ENCODE measurements at regions of chr12 and their contacts with region 1.

Region 1: GRCh38 chr12:3299929-3300832 is 190.8 kb upstream of the PRMT8 start:
- DNase-seq: peak; percentile 94
- ATAC-seq: peak; percentile 71
- H3K4me3 Mint-ChIP-seq: peak overlapping the region; percentile 50
- H3K27ac Mint-ChIP-seq: no peak overlapping the region; the same call in 1 of the 2 replicates
- H3K4me1 Mint-ChIP-seq: peaks cover 12% of the 10 kb centered on the region
- H3K27me3 Mint-ChIP-seq: no peaks in the 10 kb centered on the region; the same call in 1 of the 2 replicates
- CTCF ChIP-seq: peak; percentile 95

Region 2: DNA sequence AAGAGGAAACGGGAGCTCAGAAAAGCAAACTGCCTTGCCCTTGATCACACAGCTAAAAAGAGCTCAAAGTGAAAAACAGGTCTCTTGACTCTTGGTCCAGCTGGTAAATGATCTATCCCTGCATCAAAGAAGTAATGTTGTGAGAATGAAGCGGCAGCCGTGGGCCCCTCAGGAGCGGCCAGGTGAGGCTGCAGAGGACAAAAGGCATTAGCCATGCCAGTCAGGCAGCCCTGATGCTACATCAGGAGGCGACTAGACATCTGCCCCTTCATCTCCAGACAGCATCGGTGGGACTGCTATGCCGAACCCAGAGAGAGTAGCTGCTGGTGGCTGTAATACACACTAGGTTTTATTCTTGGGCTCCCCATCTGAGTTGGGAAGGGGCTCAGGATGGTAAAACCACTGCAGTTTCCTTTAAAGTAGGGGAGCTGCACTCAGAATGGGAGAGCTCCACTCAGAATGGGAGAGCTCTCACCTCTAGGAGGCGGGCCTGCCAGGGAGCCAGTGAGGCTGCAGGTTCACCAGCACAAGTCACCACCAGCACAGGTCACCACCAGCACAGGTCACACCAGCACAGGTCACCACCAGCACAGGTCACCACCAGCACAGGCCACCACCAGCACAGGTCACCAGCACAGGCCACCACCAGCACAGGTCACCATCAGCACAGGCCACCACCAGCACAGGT is 102.9 kb before region 1 on chr12:
- CTCF ChIA-PET with region 1: interaction called, 13 read pairs
- POLR2A ChIA-PET with region 1: no interaction called
- DNase-seq: no peak
- ATAC-seq: no peak
- H3K4me3 Mint-ChIP-seq: no peak overlapping the region
- H3K27ac Mint-ChIP-seq: no peak overlapping the region
- H3K4me1 Mint-ChIP-seq: peaks cover 41% of the 10 kb centered on the region
- H3K27me3 Mint-ChIP-seq: peaks cover 31% of the 10 kb centered on the region
- CTCF ChIP-seq: no peak

Region 3: DNA sequence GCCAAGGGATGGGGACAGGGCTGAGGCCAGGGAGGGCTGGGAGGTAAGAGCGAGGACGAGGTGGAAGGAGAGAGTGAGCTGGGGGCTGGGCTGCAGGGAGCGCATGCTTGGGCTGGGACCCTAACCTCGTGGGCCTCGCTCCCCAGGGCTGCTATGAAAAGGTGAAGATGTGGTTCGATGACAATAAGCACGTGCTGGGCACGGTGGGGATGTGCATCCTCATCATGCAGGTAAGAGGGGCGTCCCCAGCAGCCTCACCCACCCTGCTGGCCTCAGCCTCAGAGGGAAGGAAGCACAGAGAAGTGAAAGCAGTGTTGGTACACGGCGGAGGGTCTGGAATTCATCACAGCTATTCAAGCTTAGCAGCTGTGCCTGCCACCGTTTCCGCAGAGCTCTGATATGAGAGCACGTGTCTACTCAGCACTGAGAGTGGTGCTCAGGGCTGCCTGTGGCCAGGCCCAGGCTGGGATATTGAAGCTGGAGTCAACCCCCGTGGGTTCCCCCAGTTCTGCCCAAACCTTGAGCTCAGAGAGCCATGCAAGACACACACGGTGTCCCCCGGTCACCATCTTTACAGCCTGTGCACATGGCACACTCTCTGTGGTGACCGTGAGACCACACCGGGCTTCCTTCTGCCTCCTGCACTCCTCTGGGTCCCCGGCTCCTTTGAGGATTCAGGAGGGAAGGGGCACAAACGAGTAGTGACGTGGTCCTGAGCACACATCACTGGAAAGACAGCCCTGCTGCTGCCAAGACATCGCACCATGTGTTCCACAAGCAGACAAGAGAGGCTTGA is 18.4 kb before region 1 on chr12:
- CTCF ChIA-PET with region 1: interaction called, 44 read pairs
- POLR2A ChIA-PET with region 1: no interaction called
- DNase-seq: no peak
- ATAC-seq: no peak
- H3K4me3 Mint-ChIP-seq: no peak overlapping the region
- H3K27ac Mint-ChIP-seq: no peak overlapping the region
- H3K4me1 Mint-ChIP-seq: peaks cover 25% of the 10 kb centered on the region
- H3K27me3 Mint-ChIP-seq: no peaks in the 10 kb centered on the region
- CTCF ChIP-seq: no peak

Region 4: DNA sequence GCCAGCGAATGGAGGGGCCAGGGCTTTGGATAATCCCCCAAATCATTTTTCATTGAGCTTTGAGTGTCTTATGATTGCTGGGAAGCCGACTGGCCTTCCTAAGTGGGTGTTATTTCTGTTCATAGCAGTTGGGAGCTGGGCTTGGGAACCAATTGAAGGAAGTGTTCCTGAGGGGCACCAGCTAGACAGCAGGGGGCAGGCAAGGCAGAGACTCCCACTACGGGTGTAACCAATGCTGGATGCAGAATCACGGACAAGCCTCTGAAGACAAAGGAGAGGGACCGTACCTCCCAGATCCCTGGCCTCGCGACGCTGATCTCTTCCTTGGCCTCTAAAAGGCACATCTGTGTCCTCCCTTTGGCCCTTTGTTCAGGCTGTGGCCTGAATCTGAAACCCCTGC is 41.9 kb after region 1 on chr12:
- CTCF ChIA-PET with region 1: interaction called, 12 read pairs
- POLR2A ChIA-PET with region 1: no interaction called
- DNase-seq: peak; percentile 61
- ATAC-seq: peak; percentile 89
- H3K4me3 Mint-ChIP-seq: no peak overlapping the region
- H3K27ac Mint-ChIP-seq: no peak overlapping the region
- H3K4me1 Mint-ChIP-seq: peaks cover 20% of the 10 kb centered on the region
- H3K27me3 Mint-ChIP-seq: no peaks in the 10 kb centered on the region
- CTCF ChIP-seq: no peak

Region 5: DNA sequence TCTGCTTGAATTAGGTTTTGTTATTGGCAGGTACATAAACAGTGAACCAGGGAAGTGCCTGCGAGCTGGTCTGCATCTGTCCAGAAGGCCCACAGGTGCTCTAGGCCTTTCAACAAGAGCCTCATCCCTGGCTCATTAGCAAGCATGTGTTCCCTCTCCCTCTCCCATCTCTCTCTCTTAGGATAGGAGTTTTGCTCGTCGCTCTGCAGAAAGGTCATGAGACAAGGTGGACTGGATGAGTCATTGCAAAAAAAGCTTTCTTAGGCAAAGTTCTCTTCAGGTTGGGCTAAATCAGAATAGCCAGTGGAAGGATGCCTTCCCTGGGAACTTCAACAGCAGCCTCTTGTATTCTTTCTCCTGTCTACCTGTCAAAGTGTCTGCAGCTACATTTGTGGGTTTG is 176.2 kb after region 1 on chr12:
- CTCF ChIA-PET with region 1: interaction called, 13 read pairs
- POLR2A ChIA-PET with region 1: no interaction called
- DNase-seq: no peak
- ATAC-seq: no peak
- H3K4me3 Mint-ChIP-seq: no peak overlapping the region
- H3K27ac Mint-ChIP-seq: no peak overlapping the region
- H3K4me1 Mint-ChIP-seq: peaks cover 32% of the 10 kb centered on the region
- H3K27me3 Mint-ChIP-seq: peaks cover 14% of the 10 kb centered on the region
- CTCF ChIP-seq: no peak

Region 6: GRCh38 chr12:3641428-3642018 is 341.3 kb after region 1 on chr12:
- CTCF ChIA-PET with region 1: interaction called, 11 read pairs
- POLR2A ChIA-PET with region 1: no interaction called
- DNase-seq: no peak
- ATAC-seq: no peak
- H3K4me3 Mint-ChIP-seq: no peak overlapping the region
- H3K27ac Mint-ChIP-seq: no peak overlapping the region
- H3K4me1 Mint-ChIP-seq: peaks cover 16% of the 10 kb centered on the region
- H3K27me3 Mint-ChIP-seq: peaks cover 3% of the 10 kb centered on the region; the same call in 1 of the 2 replicates
- CTCF ChIP-seq: no peak

Region 7: DNA sequence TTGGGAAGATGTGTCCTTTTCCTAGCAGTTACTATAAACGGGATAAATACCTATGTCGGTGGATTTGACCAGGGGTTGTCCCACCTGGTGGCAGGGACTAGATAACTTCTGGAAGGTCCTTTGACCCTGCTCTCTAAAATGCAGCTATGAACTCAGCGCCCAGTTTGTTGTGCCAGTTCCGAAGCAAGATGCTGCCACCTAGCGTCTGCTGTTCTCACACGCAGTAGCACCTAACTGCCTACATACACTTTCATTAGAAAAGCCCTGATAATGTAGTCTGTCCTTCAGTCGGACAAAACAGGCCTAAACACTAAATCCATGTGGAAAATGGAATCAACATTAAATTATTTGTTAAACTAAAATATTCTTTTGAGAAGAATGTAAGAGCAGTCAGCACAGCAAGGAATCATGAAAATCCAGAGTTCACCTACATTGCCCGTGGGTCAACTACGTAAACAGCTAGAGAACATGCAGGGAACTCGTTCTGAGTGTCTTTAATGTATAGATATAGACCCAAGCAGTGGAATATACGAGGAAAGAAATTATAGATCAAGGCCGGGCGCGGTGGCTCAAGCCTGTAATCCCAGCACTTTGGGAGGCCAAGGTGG is 503.8 kb after region 1 on chr12:
- CTCF ChIA-PET with region 1: interaction called, 40 read pairs
- POLR2A ChIA-PET with region 1: no interaction called
- DNase-seq: peak; percentile 80
- ATAC-seq: peak; percentile 92
- H3K4me3 Mint-ChIP-seq: no peak overlapping the region
- H3K27ac Mint-ChIP-seq: no peak overlapping the region
- H3K4me1 Mint-ChIP-seq: no peaks in the 10 kb centered on the region
- H3K27me3 Mint-ChIP-seq: no peaks in the 10 kb centered on the region
- CTCF ChIP-seq: peak; percentile 51

Measured in WTC11 (cell line).